ENCODE measurements at regions of chr2 and their contacts with region 1.

Region 1: GRCh38 chr2:30231212-30231995 is at the start of gene LBH:
- DNase-seq: peak; percentile 86 to 96 (median 90)
- ATAC-seq: peak; percentile 44 to 48
- H3K4me3 Mint-ChIP-seq: peak within 1 kb of the TSS; percentile 91 to 99 (median 95)
- H3K27ac Mint-ChIP-seq: peak within 1 kb of the TSS; percentile 83 to 100 (median 94)
- H3K4me1 Mint-ChIP-seq: peaks cover 31 to 65% (median 59%) of the 10 kb centered on the region in 4 donors
- H3K27me3 Mint-ChIP-seq: no peaks in the 10 kb centered on the region
- polyA plus RNA-seq, gene LBH: 243 to 356 (median 307) TPM

Region 2: DNA sequence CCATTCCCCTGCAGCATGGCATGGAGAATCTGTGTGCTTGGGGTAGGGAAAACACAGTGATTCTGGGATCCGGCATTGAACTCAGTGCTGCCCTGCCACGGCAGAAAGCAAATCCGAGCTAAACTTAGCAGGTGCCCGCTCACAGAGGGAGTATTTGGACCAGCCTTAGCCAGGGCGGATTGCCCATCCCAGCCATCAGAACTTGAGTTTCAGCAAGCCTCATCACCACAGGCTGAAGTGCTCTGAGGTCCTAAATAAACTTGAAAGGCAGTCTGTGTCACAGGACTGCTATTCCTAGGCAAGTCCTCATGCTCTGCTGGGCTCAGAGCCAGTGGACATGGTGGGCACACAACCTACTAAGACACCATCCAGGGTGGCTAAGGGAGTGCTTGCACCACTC is 170.8 kb before region 1 on chr2:
- POLR2A ChIA-PET with region 1: no interaction called
- DNase-seq: no peak
- ATAC-seq: no peak
- H3K4me3 Mint-ChIP-seq: no peak overlapping the region
- H3K27ac Mint-ChIP-seq: no peak overlapping the region
- H3K4me1 Mint-ChIP-seq: no peaks in the 10 kb centered on the region
- H3K27me3 Mint-ChIP-seq: peaks cover 14 to 42% (median 35%) of the 10 kb centered on the region in 5 donors

Region 3: GRCh38 chr2:30165050-30165520 is 66.3 kb before region 1 on chr2:
- POLR2A ChIA-PET with region 1: interaction called, 23 read pairs
- DNase-seq: peak in 9 of 10 donors; percentile 48 to 87 (median 76)
- ATAC-seq: peak; percentile 56 to 73
- H3K4me3 Mint-ChIP-seq: peak overlapping the region in 1 of 10 donors; percentile 27
- H3K27ac Mint-ChIP-seq: peak overlapping the region in 4 of 10 donors; percentile 42 to 91 (median 68)
- H3K4me1 Mint-ChIP-seq: peaks cover 1 to 31% (median 11%) of the 10 kb centered on the region in 4 donors
- H3K27me3 Mint-ChIP-seq: no peaks in the 10 kb centered on the region

Region 4: GRCh38 chr2:30252723-30253701 is 21.6 kb after region 1 on chr2:
- POLR2A ChIA-PET with region 1: interaction called, 697 read pairs
- DNase-seq: peak in 5 of 10 donors; percentile 18 to 66 (median 45)
- ATAC-seq: peak; percentile 22 to 41
- H3K4me3 Mint-ChIP-seq: peak overlapping the region; percentile 56 to 87 (median 78)
- H3K27ac Mint-ChIP-seq: peak overlapping the region; percentile 91 to 98 (median 96)
- H3K4me1 Mint-ChIP-seq: peaks cover 58 to 97% (median 96%) of the 10 kb centered on the region in 4 donors
- H3K27me3 Mint-ChIP-seq: no peaks in the 10 kb centered on the region

Region 5: DNA sequence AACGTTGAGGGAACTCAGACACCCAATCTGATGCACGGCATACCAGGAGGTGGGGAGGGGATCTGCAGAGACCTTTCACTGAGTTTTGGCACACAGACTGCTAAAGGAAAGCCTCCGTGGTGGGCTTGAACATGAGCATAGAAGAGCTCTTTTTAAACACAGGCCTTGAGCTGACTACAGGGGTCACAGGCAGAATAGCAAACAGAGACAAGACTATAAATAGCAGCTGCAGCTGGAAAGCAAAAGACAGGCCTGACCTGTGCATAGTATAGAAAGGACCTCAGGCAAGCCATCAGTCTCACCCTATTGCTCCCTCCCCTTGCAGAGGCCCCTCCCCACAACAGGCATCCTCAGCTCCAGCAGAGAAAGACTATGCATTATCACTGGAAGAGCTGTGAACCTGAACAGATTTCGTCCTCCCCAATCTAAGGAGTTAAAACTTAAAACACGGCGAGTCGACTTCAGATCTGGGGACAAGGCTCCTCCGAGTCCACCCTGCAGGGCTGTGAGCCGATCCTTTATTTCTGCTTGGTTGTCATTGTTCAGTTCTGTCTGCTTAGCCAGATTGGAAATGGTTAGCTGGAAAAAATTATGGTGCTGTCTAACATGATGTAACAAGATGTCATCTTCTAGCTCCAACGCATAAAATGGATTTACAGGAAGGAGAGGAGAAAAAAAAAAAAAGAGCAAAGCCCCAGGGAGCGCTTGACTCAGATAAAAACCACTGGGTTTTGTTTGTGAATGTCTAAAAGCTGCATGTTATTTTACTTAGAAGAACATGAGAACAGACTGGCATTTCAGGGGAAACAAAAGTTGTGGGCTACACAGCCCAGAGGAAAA is 190.4 kb after region 1 on chr2:
- POLR2A ChIA-PET with region 1: interaction called, 44 read pairs
- DNase-seq: peak in 7 of 10 donors; percentile 22 to 76 (median 60)
- ATAC-seq: peak; percentile 66 to 70
- H3K4me3 Mint-ChIP-seq: peak overlapping the region; percentile 59 to 82 (median 70)
- H3K27ac Mint-ChIP-seq: peak overlapping the region; percentile 88 to 98 (median 93)
- H3K4me1 Mint-ChIP-seq: peaks cover 19 to 53% (median 50%) of the 10 kb centered on the region in 4 donors
- H3K27me3 Mint-ChIP-seq: no peaks in the 10 kb centered on the region

Region 6: DNA sequence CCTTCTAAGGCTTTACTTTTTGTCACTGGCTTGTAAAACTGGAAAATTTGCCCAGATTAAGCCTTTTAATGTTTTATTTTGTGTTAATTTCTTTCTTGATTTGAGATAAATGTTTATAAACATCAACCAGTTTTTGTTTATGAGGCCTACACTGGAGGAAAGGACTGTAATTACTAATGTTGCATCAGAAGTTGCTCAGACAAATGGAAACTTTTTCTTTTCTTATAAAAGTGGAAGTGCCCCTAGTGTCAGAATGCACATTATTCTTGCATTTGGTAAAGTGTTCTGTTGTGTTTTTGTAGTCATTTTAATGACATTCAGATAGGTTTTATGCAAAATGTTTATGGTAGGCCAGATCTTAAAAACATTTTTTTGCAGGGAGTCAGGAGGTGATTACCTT is 240.9 kb after region 1 on chr2:
- POLR2A ChIA-PET with region 1: interaction called, 26 read pairs
- DNase-seq: no peak
- ATAC-seq: no peak
- H3K4me3 Mint-ChIP-seq: peak overlapping the region in 1 of 10 donors; percentile 3
- H3K27ac Mint-ChIP-seq: peak overlapping the region in 2 of 10 donors; percentile 15 to 34
- H3K4me1 Mint-ChIP-seq: peaks cover 12 to 63% (median 54%) of the 10 kb centered on the region in 4 donors
- H3K27me3 Mint-ChIP-seq: no peaks in the 10 kb centered on the region